ENCODE measurements at regions of chr12 and their contacts with region 1.

Region 1: DNA sequence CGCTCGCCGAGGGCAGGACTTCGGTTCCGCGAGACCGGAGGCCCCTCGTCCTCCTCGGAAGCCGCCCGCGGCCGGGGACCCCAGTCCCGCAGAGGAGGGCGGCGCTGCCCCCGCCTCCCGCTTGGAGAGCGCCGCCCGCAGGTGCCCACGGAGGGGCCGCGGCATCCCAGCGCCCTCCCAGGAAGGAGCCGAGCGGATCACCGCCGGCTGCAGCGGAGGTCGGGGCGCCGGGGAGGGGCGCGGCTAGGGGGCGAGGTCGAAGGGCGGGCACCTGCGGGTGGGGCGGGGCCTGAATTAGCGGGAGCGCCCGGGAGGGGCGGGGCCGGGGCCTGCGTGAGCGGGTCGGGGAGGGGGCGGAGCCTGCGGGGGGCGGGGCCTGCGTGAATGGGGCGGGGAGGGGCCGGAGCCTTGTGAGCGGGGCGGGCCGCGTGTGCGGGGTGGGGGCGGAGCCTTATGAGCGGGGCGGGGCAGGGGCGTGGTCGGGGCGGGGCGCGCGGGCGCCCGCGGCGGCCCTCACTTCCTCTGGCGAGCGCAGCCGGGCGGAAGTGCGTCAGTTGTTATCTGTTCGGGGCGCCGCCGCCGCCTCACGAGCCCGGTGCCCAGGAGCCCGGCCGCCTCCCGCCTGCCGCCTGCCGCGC is at the start of gene FBRSL1:
- DNase-seq: peak; percentile 80 to 99 (median 91)
- ATAC-seq: peak; percentile 67 to 71
- H3K4me3 Mint-ChIP-seq: peak within 1 kb of the TSS; percentile 84 to 96 (median 91)
- H3K27ac Mint-ChIP-seq: peak within 1 kb of the TSS; percentile 93 to 99 (median 95)
- H3K4me1 Mint-ChIP-seq: peaks cover 44 to 75% (median 72%) of the 10 kb centered on the region in 4 donors
- H3K27me3 Mint-ChIP-seq: no peaks in the 10 kb centered on the region
- polyA plus RNA-seq, gene FBRSL1: 0.38 to 1.0 (median 0.42) TPM

Region 2: DNA sequence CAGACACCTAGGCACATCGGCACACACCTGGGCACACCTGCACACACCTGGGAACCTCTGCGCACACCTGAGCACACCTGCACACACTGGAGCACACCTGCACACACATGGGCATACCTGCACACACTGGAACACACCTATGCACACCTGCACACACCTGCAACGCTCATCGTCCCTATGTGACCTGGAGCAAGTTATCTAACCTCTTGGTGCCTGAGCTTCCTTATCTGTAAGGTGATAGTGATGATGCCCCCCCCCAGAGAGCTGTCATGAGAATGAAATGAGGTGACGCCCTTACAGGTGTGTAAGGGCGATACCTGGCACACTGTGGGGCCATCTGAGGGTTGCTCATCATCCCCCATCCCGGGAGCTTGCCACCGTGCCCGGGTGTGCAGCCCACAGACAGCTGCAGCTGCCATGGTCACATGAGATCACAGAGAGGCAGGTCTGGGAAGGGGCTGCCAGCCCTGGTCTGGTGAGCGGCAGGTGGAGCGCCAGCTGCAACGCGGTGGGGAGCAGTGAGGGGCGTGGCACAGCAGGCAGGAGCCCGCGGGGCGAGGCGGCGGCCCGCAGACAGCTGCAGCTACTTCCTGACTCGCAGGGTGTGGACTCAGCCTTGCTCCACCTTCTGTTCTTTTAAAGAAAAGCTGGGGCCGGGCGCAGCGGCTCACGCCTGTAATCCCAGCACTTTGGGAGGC is 59.6 kb before region 1 on chr12:
- POLR2A ChIA-PET with region 1: interaction called, 10 read pairs
- DNase-seq: peak; percentile 58 to 86 (median 66)
- ATAC-seq: peak; percentile 98
- H3K4me3 Mint-ChIP-seq: peak overlapping the region; percentile 41 to 81 (median 70)
- H3K27ac Mint-ChIP-seq: peak overlapping the region in 6 of 10 donors; percentile 24 to 74 (median 60)
- H3K4me1 Mint-ChIP-seq: peaks cover 11 to 50% (median 41%) of the 10 kb centered on the region in 4 donors
- H3K27me3 Mint-ChIP-seq: no peaks in the 10 kb centered on the region

Region 3: DNA sequence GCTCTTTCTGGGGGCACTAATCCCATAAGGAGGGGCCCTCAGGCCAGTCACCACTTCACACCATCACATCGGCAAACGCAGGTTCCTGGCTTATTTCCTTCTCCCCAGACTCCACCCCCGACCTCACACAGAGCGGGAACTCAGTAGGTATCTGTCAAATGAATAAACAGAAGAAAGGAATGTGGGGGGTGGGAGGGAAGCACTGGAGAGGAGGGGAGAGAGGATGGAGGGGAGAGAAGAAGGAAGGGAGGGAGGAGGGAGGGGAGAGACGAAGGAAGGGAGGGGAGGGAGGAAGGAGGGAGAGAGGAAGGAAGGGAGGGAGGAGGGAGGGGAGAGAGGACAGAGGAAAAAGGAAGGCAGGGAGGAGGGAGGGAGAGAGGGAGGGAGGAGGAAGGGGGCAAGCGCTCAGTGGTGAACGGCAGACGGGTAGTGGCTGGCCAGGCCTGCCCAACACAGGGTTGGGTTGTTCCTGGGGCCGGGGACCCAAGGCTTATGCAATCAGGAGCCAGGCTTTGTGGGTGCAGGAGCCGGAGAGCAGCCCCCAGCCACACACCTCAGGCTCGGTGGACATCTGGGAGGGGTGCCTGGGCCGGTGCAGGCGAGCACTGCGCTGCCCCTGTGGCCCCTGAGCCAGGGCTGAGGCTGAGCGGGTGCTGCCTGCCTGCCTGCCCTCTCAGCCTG is 52.3 kb before region 1 on chr12:
- POLR2A ChIA-PET with region 1: interaction called, 34 read pairs
- DNase-seq: no peak
- ATAC-seq: peak; percentile 29 to 41
- H3K4me3 Mint-ChIP-seq: peak overlapping the region in 9 of 10 donors; percentile 36 to 83 (median 72)
- H3K27ac Mint-ChIP-seq: peak overlapping the region in 8 of 10 donors; percentile 31 to 93 (median 86)
- H3K4me1 Mint-ChIP-seq: peaks cover 21 to 66% (median 63%) of the 10 kb centered on the region in 4 donors
- H3K27me3 Mint-ChIP-seq: no peaks in the 10 kb centered on the region

Region 4: GRCh38 chr12:132445884-132446632 is 43.7 kb before region 1 on chr12:
- POLR2A ChIA-PET with region 1: interaction called, 14 read pairs
- DNase-seq: peak; percentile 41 to 89 (median 62)
- ATAC-seq: peak; percentile 29 to 53
- H3K4me3 Mint-ChIP-seq: peak overlapping the region; percentile 72 to 97 (median 88)
- H3K27ac Mint-ChIP-seq: peak overlapping the region; percentile 99 to 100 (median 100)
- H3K4me1 Mint-ChIP-seq: peaks cover 32 to 76% (median 61%) of the 10 kb centered on the region in 4 donors
- H3K27me3 Mint-ChIP-seq: no peaks in the 10 kb centered on the region

Region 5: GRCh38 chr12:132475304-132476037 is 14.2 kb before region 1 on chr12:
- POLR2A ChIA-PET with region 1: interaction called, 111 read pairs
- DNase-seq: peak in 9 of 10 donors; percentile 24 to 81 (median 48)
- ATAC-seq: peak; percentile 73 to 82
- H3K4me3 Mint-ChIP-seq: peak overlapping the region; percentile 36 to 78 (median 68)
- H3K27ac Mint-ChIP-seq: peak overlapping the region in 8 of 10 donors; percentile 24 to 95 (median 74)
- H3K4me1 Mint-ChIP-seq: peaks cover 18 to 62% (median 44%) of the 10 kb centered on the region in 4 donors
- H3K27me3 Mint-ChIP-seq: no peaks in the 10 kb centered on the region